GM12878 (cell line): ENCODE measurements at regions of chr15 and their contacts with region 1.

Region 1: DNA sequence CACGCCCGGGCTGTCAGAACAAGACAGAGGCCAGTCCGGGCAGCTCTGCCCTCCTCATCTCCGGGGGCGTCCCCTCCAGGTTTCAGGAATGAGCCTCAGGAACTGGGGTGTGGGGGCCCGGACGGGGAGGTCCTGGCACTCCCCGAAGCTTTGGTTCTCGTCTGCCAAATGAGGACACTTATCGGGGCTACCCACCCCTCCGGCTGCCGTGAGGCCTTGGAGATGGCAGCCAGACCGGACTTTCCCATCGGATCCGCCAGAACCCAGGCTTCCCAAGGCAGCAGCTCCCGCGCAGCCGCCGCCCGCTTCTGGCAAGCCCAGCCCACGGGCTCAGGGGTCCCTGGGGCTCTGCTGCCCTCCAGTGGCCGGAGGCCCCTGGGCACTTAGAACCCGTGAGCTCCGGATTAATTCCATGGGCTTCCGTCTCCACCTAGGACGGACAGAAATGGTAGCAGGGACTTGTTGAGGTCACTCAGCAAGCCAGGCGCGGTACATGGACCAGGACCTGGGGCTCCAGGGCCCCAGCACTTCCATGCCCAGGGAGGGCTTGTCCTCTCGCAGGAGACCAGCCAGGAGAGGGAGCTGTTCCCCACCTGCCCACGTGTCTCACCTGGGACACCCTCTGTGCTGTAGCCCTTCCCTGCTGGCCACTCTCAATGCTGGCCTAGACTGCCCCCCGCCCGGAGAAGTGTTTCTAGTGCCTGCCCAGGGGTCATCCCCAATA is 89.4 kb downstream of the LINGO1 start:
- DNase-seq: peak; percentile 32
- ATAC-seq: peak; percentile 96
- H3K4me3 ChIP-seq: peak overlapping the region; percentile 73
- H3K27ac ChIP-seq: peak overlapping the region; percentile 52; the same call in 1 of the 2 replicates
- H3K4me1 ChIP-seq: peaks cover 17% of the 10 kb centered on the region
- H3K27me3 ChIP-seq: no peaks in the 10 kb centered on the region
- CTCF ChIP-seq: peak; percentile 89 to 99 (median 93)
- EP300 ChIP-seq: no peak
- POLR2A ChIP-seq: peak; percentile 50; the same call in 1 of the 2 replicates
- RAD21 ChIP-seq: peak; percentile 98

Region 2: DNA sequence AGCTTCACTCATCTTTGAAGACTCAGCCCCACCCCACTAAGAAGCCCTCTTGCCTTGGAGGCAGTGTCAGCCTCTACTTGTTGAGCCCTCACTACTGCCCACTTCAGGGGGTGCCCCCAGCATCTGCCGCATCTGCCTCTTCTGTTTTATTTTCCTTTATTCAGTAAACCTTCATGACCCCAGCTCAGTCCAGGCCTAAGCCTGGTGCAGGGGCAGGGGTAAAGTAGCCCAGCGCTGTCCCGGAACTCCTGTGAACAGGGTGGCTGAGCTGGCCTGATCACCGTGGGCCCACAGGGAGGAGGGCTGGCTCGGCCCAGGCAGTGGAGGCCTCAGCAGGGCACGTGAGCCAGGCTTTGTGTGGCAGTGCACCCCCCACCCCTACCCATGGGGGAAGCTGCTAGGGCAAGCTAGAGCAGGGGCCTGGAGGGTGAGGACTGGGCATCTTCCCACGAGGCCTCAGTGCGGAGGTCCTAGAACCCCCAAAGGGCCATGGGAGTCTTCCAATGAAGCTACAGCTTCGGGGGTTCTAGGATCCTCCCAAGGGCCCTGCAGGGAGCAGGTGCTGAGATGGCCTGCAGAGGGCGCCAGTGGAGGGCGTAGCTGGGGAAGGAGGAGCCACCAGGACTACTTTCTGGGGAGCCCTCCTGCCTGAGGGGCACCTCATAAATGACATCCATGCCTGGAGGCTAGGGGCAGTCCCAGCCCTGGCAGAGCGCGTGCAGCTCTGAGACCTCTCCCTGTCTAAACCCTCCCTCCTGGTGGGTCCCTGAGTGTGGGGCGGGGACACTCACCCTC is 508.4 kb before region 1 on chr15:
- CTCF ChIA-PET with region 1: interaction called, 21 read pairs
- POLR2A ChIA-PET with region 1: no interaction called
- RAD21 ChIA-PET with region 1: interaction called, 14 read pairs
- SMC1A ChIA-PET with region 1: interaction called, 8 read pairs
- in situ Hi-C with region 1: no loop called
- intact Hi-C with region 1: no loop called
- DNase-seq: no peak
- ATAC-seq: peak; percentile 20; the same call in 2 of the 3 replicates
- H3K4me3 ChIP-seq: no peak overlapping the region
- H3K27ac ChIP-seq: no peak overlapping the region
- H3K4me1 ChIP-seq: no peaks in the 10 kb centered on the region
- H3K27me3 ChIP-seq: no peaks in the 10 kb centered on the region
- CTCF ChIP-seq: peak; percentile 26 to 66 (median 58)
- EP300 ChIP-seq: no peak
- POLR2A ChIP-seq: no peak
- RAD21 ChIP-seq: peak; percentile 48

Region 3: DNA sequence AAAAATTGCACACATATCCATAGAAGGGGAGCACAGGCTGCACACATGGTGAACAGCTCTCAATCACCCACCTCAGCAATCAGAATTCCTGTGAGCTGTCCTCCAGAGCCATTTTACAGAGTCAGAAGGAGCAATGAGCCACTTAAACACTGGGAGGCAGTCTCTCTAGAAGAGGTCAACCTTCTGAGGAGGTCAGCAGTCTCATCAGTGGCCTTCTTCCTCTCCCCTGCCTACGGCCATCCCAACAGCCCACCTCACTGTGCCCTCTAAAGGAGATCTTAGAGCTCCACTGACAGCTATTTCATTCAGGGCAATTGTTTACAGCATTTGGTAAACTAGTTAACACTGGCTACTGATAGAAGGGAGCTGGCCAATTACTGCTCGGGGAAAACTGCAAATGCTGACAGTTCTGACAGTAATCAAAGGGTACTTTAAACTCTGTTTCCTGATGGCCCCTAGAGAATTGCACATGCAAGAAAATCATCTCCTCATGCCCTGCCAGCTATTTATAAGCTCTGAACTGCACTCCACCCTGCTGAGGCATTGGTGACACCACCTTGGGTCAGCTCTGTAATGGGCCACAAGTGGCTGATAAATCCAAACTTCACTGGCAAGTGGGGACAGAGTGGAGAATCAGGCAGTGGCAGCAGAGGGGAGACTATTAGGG is 430.4 kb before region 1 on chr15:
- CTCF ChIA-PET with region 1: interaction called, 155 read pairs
- POLR2A ChIA-PET with region 1: no interaction called
- RAD21 ChIA-PET with region 1: interaction called, 87 read pairs
- SMC1A ChIA-PET with region 1: interaction called, 102 read pairs
- in situ Hi-C with region 1: loop called (anchors 5 kb)
- intact Hi-C with region 1: no loop called
- DNase-seq: no peak
- ATAC-seq: no peak
- H3K4me3 ChIP-seq: no peak overlapping the region
- H3K27ac ChIP-seq: no peak overlapping the region
- H3K4me1 ChIP-seq: no peaks in the 10 kb centered on the region
- H3K27me3 ChIP-seq: no peaks in the 10 kb centered on the region
- CTCF ChIP-seq: no peak
- EP300 ChIP-seq: no peak
- POLR2A ChIP-seq: no peak
- RAD21 ChIP-seq: no peak

Region 4: DNA sequence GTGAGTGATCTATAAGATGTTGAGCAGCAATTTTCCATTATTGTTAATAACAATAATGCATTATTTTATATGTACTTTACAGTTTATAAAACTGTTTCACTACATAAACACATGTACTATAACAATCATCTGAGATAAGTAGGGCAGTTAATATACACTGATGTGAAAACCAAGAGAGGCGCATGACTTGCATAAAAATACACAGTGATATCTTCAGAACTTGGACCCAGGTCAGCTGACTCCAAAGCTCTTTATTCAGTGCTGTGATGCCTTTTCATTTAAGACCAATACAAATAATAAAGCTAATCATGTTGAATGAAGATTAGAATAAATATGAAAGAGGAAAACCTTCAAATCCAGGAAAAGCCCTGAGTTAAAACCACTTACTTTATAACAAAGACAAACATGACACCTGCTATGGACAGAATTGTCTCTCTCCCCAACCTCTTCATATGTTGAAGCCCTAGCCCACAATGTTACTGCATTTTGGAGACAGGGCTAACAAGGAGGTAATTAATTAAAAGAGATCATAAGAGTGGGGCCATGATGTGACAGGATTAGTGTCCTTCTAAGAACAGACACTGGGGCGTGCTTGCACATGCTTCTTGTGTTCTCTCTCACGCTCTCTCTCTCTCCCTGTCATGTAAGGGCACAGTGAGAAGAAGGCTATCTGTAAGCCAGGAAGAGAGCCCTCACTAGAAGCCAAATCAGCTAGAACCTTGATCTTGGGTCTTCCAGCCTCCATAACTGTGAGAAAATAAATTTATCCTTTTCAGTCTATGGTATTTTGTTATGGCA is 416.6 kb before region 1 on chr15:
- CTCF ChIA-PET with region 1: interaction called, 155 read pairs
- POLR2A ChIA-PET with region 1: no interaction called
- RAD21 ChIA-PET with region 1: interaction called, 87 read pairs
- SMC1A ChIA-PET with region 1: interaction called, 102 read pairs
- in situ Hi-C with region 1: no loop called
- intact Hi-C with region 1: no loop called
- DNase-seq: no peak
- ATAC-seq: no peak
- H3K4me3 ChIP-seq: no peak overlapping the region
- H3K27ac ChIP-seq: no peak overlapping the region
- H3K4me1 ChIP-seq: peaks cover 10% of the 10 kb centered on the region
- H3K27me3 ChIP-seq: no peaks in the 10 kb centered on the region
- CTCF ChIP-seq: no peak
- EP300 ChIP-seq: no peak
- POLR2A ChIP-seq: no peak
- RAD21 ChIP-seq: no peak

Region 5: DNA sequence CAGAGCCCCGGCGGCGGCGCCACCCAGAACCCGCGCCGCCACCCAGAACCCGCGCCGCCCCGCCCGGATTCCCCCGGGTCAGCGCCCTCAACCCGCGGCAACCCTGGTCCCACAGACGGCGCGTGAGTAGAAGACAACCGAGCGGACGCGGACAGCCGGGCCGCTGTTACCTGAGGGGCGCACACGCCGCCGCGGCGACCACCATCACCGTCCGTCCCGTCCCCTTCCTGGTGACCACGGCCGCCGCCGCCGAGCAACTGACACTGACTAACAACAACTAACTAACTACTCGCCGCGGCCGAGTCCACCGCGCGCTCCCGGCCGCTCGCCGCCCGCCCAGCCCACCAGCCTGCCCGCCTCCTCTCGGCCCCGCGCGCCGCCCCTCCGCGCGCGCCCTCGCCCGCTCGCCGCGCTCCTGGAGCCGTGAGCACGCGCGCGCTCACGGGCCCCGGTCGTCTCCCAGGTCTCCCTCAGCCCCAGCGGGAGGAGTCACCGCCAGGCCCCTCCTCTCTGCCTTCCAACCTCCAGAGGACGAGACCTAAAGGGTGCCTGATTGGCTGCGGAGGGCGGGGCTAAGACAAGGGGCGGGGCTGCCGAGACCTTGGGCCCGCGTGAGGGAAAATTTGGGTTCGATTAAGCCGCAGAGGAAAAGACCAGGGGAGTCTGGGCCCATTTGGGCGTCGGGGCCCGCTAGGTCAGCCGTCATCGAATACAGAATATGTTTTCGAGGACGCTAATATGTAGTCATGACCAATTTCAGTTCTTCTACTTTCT is 123.3 kb before region 1 on chr15 and contains the start of gene PEAK1:
- CTCF ChIA-PET with region 1: interaction called, 13 read pairs
- POLR2A ChIA-PET with region 1: interaction called, 4 read pairs
- RAD21 ChIA-PET with region 1: interaction called, 8 read pairs
- SMC1A ChIA-PET with region 1: interaction called, 8 read pairs
- in situ Hi-C with region 1: no loop called
- intact Hi-C with region 1: no loop called
- DNase-seq: peak; percentile 86
- ATAC-seq: peak; percentile 93
- H3K4me3 ChIP-seq: peak within 1 kb of the TSS; percentile 84
- H3K27ac ChIP-seq: peak within 1 kb of the TSS; percentile 98
- H3K4me1 ChIP-seq: no peaks in the 10 kb centered on the region; the same call in 1 of the 2 replicates
- H3K27me3 ChIP-seq: no peaks in the 10 kb centered on the region
- CTCF ChIP-seq: no peak
- EP300 ChIP-seq: no peak
- POLR2A ChIP-seq: peak; percentile 91
- RAD21 ChIP-seq: no peak
- polyA plus RNA-seq, gene PEAK1: 0.62 to 1.1 TPM

Region 6: DNA sequence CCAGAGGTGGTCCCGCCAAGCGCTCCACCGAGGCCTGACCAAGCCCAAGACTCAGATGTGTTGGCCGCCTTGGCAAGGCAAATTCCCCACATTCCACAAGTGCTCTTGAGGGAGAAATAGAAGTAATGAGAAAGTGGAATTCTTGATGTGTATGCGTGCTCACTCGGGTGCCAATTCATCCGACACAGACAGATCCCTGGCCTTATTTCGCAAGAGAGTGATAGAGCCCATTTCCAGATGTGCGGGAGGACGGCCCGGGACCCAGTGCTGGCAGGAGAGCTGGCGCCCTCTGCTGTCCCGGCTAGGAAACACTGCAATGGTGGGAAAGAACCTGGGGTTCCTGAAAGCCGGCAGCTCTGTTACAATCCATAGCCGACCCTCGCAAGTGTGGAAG is 46.6 kb before region 1 on chr15:
- CTCF ChIA-PET with region 1: interaction called, 78 read pairs
- POLR2A ChIA-PET with region 1: interaction called, 3 read pairs
- RAD21 ChIA-PET with region 1: interaction called, 51 read pairs
- SMC1A ChIA-PET with region 1: interaction called, 21 read pairs
- in situ Hi-C with region 1: no loop called
- intact Hi-C with region 1: loop called (anchors 5 kb)
- DNase-seq: no peak
- ATAC-seq: peak; percentile 92
- H3K4me3 ChIP-seq: no peak overlapping the region
- H3K27ac ChIP-seq: no peak overlapping the region
- H3K4me1 ChIP-seq: peaks cover 20% of the 10 kb centered on the region
- H3K27me3 ChIP-seq: no peaks in the 10 kb centered on the region
- CTCF ChIP-seq: peak; percentile 89 to 96 (median 96)
- EP300 ChIP-seq: no peak
- POLR2A ChIP-seq: no peak
- RAD21 ChIP-seq: peak; percentile 95

Region 7: GRCh38 chr15:77531146-77531962 is 12.0 kb before region 1 on chr15:
- CTCF ChIA-PET with region 1: interaction called, 10 read pairs
- POLR2A ChIA-PET with region 1: no interaction called
- RAD21 ChIA-PET with region 1: interaction called, 7 read pairs
- SMC1A ChIA-PET with region 1: interaction called, 3 read pairs
- in situ Hi-C with region 1: no loop called
- intact Hi-C with region 1: no loop called
- DNase-seq: no peak
- ATAC-seq: no peak
- H3K4me3 ChIP-seq: no peak overlapping the region
- H3K27ac ChIP-seq: no peak overlapping the region
- H3K4me1 ChIP-seq: peaks cover 5% of the 10 kb centered on the region
- H3K27me3 ChIP-seq: no peaks in the 10 kb centered on the region; a peak in 1 of 4 replicates
- CTCF ChIP-seq: no peak
- EP300 ChIP-seq: no peak
- POLR2A ChIP-seq: no peak
- RAD21 ChIP-seq: no peak